ENCODE measurements at regions of chr11 and their contacts with region 1.

Region 1: DNA sequence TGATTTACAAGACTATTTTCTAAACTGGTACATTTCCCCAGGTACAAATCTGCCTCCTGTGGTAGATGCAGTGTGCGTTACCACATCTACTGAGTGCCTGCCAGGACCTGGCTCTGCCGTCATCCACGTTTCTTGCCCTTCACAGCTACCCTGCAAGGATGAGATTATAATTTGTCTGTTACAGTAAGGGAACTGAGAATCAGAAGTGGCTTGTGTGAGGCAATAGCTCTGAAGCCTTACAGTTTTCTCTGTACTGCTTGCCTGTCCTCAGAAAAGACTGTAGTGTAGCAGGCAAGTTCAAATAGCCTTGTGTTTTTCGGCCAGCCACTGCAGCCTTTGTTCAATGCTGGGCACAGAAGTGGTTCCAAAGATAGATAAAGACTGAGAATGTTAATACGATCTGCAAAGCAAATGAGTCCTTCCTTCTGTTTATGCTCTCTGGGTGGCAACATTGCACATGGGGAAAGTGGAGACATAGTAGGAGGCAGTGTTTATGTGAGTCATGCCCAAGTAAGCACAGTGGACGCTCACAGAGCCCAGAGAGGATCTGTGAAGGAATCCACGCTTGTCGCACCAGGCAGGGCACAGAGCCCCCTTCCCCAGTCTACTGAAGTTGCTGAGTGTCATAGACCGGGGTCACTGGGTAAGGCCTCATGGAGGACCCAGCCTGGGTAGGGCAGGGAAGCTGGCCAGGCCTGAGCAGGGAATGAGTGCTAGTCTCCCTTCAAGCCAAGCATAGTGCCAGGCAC is 49.1 kb downstream of the MICAL2 start:
- DNase-seq: peak in 1 of 2 donors; percentile 82
- H3K4me3 ChIP-seq: peak overlapping the region in 1 of 2 donors; percentile 26
- H3K27ac ChIP-seq: peak overlapping the region; percentile 98
- H3K4me1 ChIP-seq: peaks cover 74 to 90% of the 10 kb centered on the region in 2 donors
- H3K27me3 ChIP-seq: no peaks in the 10 kb centered on the region
- CTCF ChIP-seq: no peak

Region 2: DNA sequence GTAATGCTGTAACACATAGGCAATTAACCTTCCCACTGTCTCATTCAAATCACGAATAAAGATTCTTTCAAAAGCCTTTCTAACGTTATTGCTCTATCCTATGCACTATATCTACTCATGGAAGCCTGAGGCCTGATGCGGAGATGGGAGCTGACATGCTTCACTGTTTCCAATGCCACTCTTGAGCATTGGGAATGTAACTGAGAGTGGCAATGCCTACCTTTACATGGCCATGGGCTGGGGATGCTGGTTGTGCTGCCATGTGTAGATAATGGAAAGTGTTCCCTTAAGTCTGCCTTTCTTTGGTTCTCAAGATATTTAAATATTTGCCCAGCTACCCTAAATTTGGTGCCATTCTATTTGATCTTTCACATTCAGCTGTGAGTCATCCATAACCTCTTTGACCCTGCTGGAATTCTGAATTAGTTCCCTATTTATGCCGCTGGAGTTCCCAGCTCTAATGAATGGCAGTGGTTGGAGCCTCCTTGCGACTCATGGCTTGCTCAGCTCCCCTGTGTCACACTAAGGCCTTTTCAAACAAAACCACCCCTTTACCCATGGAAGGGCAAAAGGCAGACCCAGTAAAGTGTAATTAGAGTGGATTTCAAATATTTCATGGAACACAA is 129.7 kb before region 1 on chr11:
- intact Hi-C with region 1: no loop called
- DNase-seq: no peak
- H3K4me3 ChIP-seq: no peak overlapping the region
- H3K27ac ChIP-seq: no peak overlapping the region
- H3K4me1 ChIP-seq: no peaks in the 10 kb centered on the region
- H3K27me3 ChIP-seq: no peaks in the 10 kb centered on the region
- CTCF ChIP-seq: no peak

Region 3: GRCh38 chr11:12075822-12076821 is 83.4 kb before region 1 on chr11:
- intact Hi-C with region 1: loop called (anchors 2 kb)
- DNase-seq: peak in 1 of 2 donors; percentile 93
- H3K4me3 ChIP-seq: no peak overlapping the region
- H3K27ac ChIP-seq: peak overlapping the region; percentile 83 to 91
- H3K4me1 ChIP-seq: peaks cover 16 to 42% of the 10 kb centered on the region in 2 donors
- H3K27me3 ChIP-seq: no peaks in the 10 kb centered on the region
- CTCF ChIP-seq: no peak

Region 4: GRCh38 chr11:12087075-12088004 is 72.2 kb before region 1 on chr11:
- intact Hi-C with region 1: loop called (anchors 2 kb)
- DNase-seq: peak in 1 of 2 donors; percentile 82
- H3K4me3 ChIP-seq: peak overlapping the region; percentile 46 to 69
- H3K27ac ChIP-seq: peak overlapping the region; percentile 98 to 99
- H3K4me1 ChIP-seq: peaks cover 24 to 59% of the 10 kb centered on the region in 2 donors
- H3K27me3 ChIP-seq: no peaks in the 10 kb centered on the region
- CTCF ChIP-seq: peak; percentile 20 to 35 (median 27)

Region 5: DNA sequence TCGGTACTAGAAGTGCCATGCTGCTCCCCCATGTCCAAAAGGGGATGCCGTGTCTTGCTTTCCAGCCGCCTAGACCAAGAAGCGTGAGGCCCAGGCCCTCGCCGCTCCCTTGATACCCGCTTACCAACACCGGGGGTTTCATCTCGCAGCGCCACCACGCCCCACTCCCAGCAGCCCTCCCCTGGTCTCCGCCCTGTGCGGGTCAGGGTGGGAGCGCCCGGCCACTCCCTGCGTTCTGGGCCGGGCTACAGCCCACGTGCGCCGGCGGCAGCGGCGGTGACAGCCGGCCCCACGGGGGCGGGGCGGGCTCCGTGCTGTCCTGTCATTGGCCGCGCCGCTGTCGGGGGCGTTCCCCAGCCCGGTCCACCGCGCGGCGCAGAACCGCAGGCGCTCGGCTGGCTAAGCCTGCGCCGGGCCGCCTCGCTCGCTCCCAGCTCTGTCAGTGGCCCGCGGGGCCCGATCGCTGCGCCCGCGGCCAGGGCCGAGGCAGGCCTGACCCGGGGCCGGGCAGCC is 49.3 kb before region 1 on chr11 and contains the start of gene MICAL2:
- intact Hi-C with region 1: loop called (anchors 2 kb)
- DNase-seq: peak; percentile 61 to 94
- H3K4me3 ChIP-seq: peak within 1 kb of the TSS; percentile 89 to 91
- H3K27ac ChIP-seq: peak within 1 kb of the TSS; percentile 92 to 93
- H3K4me1 ChIP-seq: peaks cover 2 to 12% of the 10 kb centered on the region in 2 donors
- H3K27me3 ChIP-seq: no peaks in the 10 kb centered on the region
- CTCF ChIP-seq: no peak
- total RNA-seq, gene MICAL2: 237 TPM

Region 6: DNA sequence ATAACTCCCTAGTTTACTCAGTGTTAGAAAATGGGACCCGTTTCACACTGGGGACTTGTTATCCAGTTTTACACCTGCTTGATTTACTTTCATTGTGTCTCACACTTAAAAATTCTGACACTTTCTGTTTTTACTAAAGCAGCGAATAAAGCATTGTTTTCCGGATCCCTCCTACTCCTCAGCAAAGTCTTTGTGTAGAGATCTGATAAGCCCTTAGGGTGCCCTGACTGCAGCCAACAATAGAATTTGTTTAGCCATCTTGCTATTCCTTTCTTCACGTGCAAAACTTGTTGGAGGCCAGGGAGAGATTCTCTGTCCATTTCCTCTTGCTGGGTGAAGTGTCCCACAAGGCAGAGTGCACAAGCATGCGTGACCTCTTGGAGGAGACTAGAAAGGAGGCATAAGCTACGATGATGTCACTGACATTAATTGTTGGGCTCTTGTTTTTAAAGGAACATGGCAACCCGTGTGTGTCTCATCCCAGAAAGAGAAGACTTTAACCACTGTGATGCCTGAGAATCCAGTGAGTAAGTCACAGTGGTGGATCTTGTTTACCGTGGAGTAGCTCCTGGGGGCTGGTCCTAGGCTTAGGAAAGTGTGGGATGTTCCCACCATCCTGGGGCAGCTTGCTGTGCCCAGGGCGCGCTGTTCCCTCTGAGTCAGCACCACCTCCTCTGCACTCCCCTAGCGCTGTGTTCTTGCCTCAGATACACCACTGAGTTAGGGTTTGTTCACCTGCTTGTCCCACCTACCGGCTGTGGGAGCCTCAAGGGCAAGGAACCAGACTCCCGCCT is 21.4 kb before region 1 on chr11:
- intact Hi-C with region 1: loop called (anchors 2 kb)
- DNase-seq: peak; percentile 52 to 90
- H3K4me3 ChIP-seq: peak overlapping the region in 1 of 2 donors; percentile 16
- H3K27ac ChIP-seq: peak overlapping the region; percentile 88 to 89
- H3K4me1 ChIP-seq: peaks cover 41 to 85% of the 10 kb centered on the region in 2 donors
- H3K27me3 ChIP-seq: no peaks in the 10 kb centered on the region
- CTCF ChIP-seq: no peak

Region 7: GRCh38 chr11:12235947-12236743 is 76.6 kb after region 1 on chr11:
- intact Hi-C with region 1: loop called (anchors 2 kb)
- DNase-seq: peak in 1 of 2 donors; percentile 77
- H3K4me3 ChIP-seq: no peak overlapping the region
- H3K27ac ChIP-seq: peak overlapping the region; percentile 94 to 98
- H3K4me1 ChIP-seq: peaks cover 17 to 92% of the 10 kb centered on the region in 2 donors
- H3K27me3 ChIP-seq: no peaks in the 10 kb centered on the region
- CTCF ChIP-seq: peak; percentile 60 to 64 (median 60)